GM13976 (cell line): ENCODE measurements at regions of chr20 and their contacts with region 1.

Region 1: DNA sequence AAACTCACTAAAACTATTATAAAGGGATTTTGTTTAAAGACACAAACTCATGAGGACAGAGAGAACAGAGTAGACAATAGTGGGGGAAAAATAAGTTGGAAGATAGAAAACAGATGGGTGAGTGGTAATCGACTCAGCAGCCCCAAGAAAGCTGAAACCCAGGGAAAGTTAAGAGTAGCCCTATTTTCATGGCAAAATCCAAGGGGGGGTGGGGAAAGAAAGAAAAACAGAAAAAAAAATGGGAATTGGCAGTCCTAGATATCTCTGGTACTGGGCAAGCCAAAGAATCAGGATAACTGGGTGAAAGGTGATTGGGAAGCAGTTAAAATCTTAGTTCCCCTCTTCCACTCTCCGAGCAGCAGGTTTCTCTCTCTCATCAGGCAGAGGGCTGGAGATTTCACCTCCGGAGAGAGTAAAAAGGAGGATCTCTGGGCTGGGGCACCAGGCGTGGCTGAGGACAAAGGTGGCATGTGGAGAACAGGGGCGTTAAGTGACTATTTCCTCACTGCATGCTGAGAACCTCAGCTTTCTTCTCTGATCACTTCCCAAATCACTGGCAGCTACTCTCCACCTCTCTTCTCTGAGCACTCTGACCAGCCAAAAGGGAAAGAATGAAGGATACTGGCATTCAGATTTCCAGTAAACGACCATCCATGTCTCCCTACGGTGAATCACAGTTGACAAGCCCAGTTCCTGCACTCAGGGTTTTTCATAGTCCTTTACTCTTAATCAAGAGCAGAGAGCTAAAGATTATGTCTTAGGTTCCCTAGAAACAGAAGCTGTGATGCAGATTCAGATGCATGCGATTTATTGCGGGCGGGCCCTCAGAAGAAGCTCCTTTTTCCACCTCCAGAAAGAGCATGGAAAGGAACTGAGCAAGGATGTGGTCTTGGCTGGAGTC is 7.3 kb upstream of the RNF24 start:
- DNase-seq: no peak
- CTCF ChIP-seq: no peak

Region 2: GRCh38 chr20:4064144-4064909 is 41.7 kb after region 1 on chr20:
- in situ Hi-C with region 1: loop called (anchors 5 kb)
- DNase-seq: no peak
- CTCF ChIP-seq: no peak

Region 3: DNA sequence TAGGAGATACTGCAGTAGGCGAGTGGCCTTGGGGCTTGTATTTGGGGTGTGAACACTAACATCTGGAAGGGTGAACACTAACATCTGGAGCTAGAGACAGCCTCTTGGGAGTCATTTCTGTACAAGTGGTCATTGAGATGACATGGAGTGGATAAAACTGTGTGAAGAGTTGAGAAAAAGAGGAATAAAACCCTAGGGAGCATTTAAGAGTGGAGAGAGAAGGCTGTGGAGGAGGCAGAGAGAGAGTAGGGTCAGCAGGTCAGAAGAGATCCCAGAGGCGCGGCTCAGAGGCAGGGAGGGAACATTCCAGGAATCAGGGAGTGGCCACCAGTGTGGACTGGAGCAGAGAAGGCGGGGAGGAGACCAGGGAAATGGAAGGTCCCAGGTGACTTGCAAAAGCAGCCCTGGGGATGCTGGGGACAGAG is 194.7 kb after region 1 on chr20:
- in situ Hi-C with region 1: no loop called
- DNase-seq: no peak
- CTCF ChIP-seq: no peak